ENCODE measurements at regions of chr22 and their contacts with region 1.

Region 1: DNA sequence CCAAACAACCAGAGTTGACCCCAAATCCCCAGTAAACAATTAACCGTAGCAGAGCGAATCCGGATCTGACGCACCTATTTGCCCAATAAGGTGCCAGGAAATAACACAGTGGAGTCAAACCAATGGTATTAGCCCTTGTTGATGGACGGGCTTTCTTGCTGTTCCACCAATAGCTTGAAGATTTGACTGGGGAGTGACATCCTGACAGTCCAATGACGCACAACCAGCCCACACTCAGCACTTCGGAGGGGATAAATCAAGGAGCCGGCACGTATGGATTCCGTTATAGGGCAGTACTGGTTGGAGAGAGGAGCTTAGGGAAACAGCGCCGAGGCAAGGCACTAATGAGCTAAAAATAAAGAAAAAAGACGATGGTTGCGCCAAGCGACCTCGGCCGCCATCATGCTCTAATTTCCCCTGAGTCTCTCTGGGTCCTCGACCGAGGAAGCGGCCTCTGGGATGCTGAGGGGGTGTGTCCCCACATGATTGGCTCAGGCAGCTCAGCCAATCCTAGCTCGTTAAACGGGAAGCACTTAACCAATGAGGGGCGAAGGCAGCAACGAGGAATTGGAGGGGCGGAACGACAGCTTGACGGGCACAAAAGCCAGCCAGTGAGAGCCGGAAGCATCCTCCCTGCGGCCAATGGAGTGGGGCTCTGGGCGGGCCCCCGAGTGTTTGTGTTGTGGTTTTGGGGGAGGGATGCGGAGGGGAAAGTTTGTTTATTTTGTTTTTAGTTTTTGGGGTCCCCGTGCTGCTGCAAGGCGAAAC is 49.5 kb downstream of the FAM83F start:
- DNase-seq: peak; percentile 99
- ATAC-seq: peak; percentile 84
- H3K4me3 ChIP-seq: peak overlapping the region; percentile 65 to 98 (median 97)
- H3K4me3 Mint-ChIP-seq: peak overlapping the region; percentile 95
- H3K27ac ChIP-seq: peak overlapping the region; percentile 97 to 100
- H3K27ac Mint-ChIP-seq: peak overlapping the region; percentile 99
- H3K4me1 ChIP-seq: peaks cover 39 to 43% of the 10 kb centered on the region in 2 donors
- H3K4me1 Mint-ChIP-seq: peaks cover 40% of the 10 kb centered on the region
- H3K27me3 ChIP-seq: peaks cover 0 to 14% (median 2%) of the 10 kb centered on the region in 4 experiments
- H3K27me3 Mint-ChIP-seq: peaks cover 7% of the 10 kb centered on the region
- CTCF ChIP-seq: no peak

Region 2: GRCh38 chr22:39152511-39153219 is 891.6 kb before region 1 on chr22 and contains the start of gene CBX7:
- CTCF ChIA-PET with region 1: no interaction called
- POLR2A ChIA-PET with region 1: interaction called, 3 read pairs
- intact Hi-C with region 1: loop called (anchors 1 kb)
- DNase-seq: peak; percentile 96
- ATAC-seq: peak; percentile 88
- H3K4me3 ChIP-seq: peak within 1 kb of the TSS; percentile 53 to 97 (median 87)
- H3K4me3 Mint-ChIP-seq: peak within 1 kb of the TSS; percentile 90
- H3K27ac ChIP-seq: peak within 1 kb of the TSS; percentile 81 to 97
- H3K27ac Mint-ChIP-seq: peak within 1 kb of the TSS; percentile 90
- H3K4me1 ChIP-seq: peaks cover 51 to 53% of the 10 kb centered on the region in 2 donors
- H3K4me1 Mint-ChIP-seq: peaks cover 43% of the 10 kb centered on the region
- H3K27me3 ChIP-seq: peaks cover 0 to 14% (median 8%) of the 10 kb centered on the region in 4 experiments
- H3K27me3 Mint-ChIP-seq: peaks cover 33% of the 10 kb centered on the region
- CTCF ChIP-seq: no peak
- total RNA-seq, gene CBX7: 141 and 147 TPM in 2 replicates

Region 3: GRCh38 chr22:39471381-39472141 is 572.7 kb before region 1 on chr22:
- CTCF ChIA-PET with region 1: no interaction called
- POLR2A ChIA-PET with region 1: interaction called, 12 read pairs
- intact Hi-C with region 1: no loop called
- DNase-seq: peak; percentile 43
- ATAC-seq: peak; percentile 60
- H3K4me3 ChIP-seq: peak overlapping the region in 1 of 5 experiments; percentile 14
- H3K4me3 Mint-ChIP-seq: peak overlapping the region; percentile 85
- H3K27ac ChIP-seq: peak overlapping the region; percentile 40 to 68
- H3K27ac Mint-ChIP-seq: peak overlapping the region; percentile 89
- H3K4me1 ChIP-seq: peaks cover 41 to 69% of the 10 kb centered on the region in 2 donors
- H3K4me1 Mint-ChIP-seq: peaks cover 64% of the 10 kb centered on the region
- H3K27me3 ChIP-seq: no peaks in the 10 kb centered on the region
- H3K27me3 Mint-ChIP-seq: no peaks in the 10 kb centered on the region
- CTCF ChIP-seq: no peak

Region 4: GRCh38 chr22:39496131-39496838 is 548.0 kb before region 1 on chr22:
- CTCF ChIA-PET with region 1: interaction called, 11 read pairs
- POLR2A ChIA-PET with region 1: interaction called, 6 read pairs
- intact Hi-C with region 1: no loop called
- DNase-seq: peak; percentile 62
- ATAC-seq: peak; percentile 75
- H3K4me3 ChIP-seq: no peak overlapping the region
- H3K4me3 Mint-ChIP-seq: no peak overlapping the region
- H3K27ac ChIP-seq: no peak overlapping the region
- H3K27ac Mint-ChIP-seq: peak overlapping the region; percentile 70
- H3K4me1 ChIP-seq: peaks cover 4 to 7% of the 10 kb centered on the region in 2 donors
- H3K4me1 Mint-ChIP-seq: peaks cover 16% of the 10 kb centered on the region
- H3K27me3 ChIP-seq: no peaks in the 10 kb centered on the region
- H3K27me3 Mint-ChIP-seq: no peaks in the 10 kb centered on the region
- CTCF ChIP-seq: peak; percentile 73

Region 5: DNA sequence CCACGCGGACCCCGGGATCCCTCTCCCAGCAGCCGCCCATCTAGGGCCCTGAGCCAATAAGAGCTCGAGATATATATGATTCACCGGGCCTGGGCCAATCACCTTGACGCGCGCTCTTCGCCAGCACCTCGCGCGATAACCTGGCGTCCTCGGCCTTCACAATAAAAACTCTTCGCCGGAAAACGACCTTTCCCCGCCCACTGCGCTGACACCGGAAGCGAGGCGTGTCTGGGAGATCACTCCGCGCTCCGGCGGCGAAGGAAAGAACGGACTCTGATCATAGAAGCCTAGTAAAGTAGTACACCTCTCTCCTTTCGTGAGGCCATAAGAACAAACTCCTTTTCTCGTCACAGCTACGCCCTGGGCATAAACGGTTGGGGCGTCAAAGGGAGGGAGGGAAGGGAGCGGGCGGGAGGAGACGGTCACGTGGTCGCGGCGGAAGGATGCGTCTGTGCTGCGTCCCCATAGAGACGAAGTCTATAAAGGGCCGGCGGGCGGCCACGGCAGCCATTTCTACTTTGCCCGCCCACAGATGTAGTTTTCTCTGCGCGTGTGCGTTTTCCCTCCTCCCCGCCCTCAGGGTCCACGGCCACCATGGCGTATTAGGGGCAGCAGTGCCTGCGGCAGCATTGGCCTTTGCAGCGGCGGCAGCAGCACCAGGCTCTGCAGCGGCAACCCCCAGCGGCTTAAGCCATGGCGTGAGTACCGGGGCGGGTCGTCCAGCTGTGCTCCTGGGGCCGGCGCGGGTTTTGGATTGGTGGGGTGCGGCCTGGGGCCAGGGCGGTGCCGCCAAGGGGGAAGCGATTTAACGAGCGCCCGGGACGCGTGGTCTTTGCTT is 524.0 kb before region 1 on chr22 and contains the start of gene ATF4:
- CTCF ChIA-PET with region 1: interaction called, 3 read pairs
- POLR2A ChIA-PET with region 1: interaction called, 21 read pairs
- intact Hi-C with region 1: loop called (anchors 1 kb)
- DNase-seq: peak; percentile 100
- ATAC-seq: peak; percentile 89
- H3K4me3 ChIP-seq: peak within 1 kb of the TSS; percentile 82 to 100 (median 99)
- H3K4me3 Mint-ChIP-seq: peak within 1 kb of the TSS; percentile 94
- H3K27ac ChIP-seq: peak within 1 kb of the TSS; percentile 91 to 95
- H3K27ac Mint-ChIP-seq: peak within 1 kb of the TSS; percentile 98
- H3K4me1 ChIP-seq: peaks cover 31 to 49% of the 10 kb centered on the region in 2 donors
- H3K4me1 Mint-ChIP-seq: peaks cover 59% of the 10 kb centered on the region
- H3K27me3 ChIP-seq: no peaks in the 10 kb centered on the region
- H3K27me3 Mint-ChIP-seq: no peaks in the 10 kb centered on the region
- CTCF ChIP-seq: no peak
- total RNA-seq, gene ATF4: 236 and 244 TPM in 2 replicates

Region 6: GRCh38 chr22:40033586-40034380 is 10.5 kb before region 1 on chr22:
- CTCF ChIA-PET with region 1: no interaction called
- POLR2A ChIA-PET with region 1: no interaction called
- intact Hi-C with region 1: no loop called
- DNase-seq: no peak
- ATAC-seq: no peak
- H3K4me3 ChIP-seq: no peak overlapping the region
- H3K4me3 Mint-ChIP-seq: no peak overlapping the region
- H3K27ac ChIP-seq: no peak overlapping the region
- H3K27ac Mint-ChIP-seq: no peak overlapping the region
- H3K4me1 ChIP-seq: peaks cover 0 to 5% of the 10 kb centered on the region in 2 donors
- H3K4me1 Mint-ChIP-seq: peaks cover 2% of the 10 kb centered on the region
- H3K27me3 ChIP-seq: peaks cover 0 to 25% (median 8%) of the 10 kb centered on the region in 4 experiments
- H3K27me3 Mint-ChIP-seq: peaks cover 17% of the 10 kb centered on the region
- CTCF ChIP-seq: no peak

Region 7: GRCh38 chr22:40177738-40178416 is 133.6 kb after region 1 on chr22 and contains the start of gene TNRC6B:
- CTCF ChIA-PET with region 1: interaction called, 5 read pairs
- POLR2A ChIA-PET with region 1: interaction called, 8 read pairs
- intact Hi-C with region 1: loop called (anchors 1 kb)
- DNase-seq: peak; percentile 93
- ATAC-seq: peak; percentile 90
- H3K4me3 ChIP-seq: peak within 1 kb of the TSS; percentile 56 to 100 (median 72)
- H3K4me3 Mint-ChIP-seq: peak within 1 kb of the TSS; percentile 84
- H3K27ac ChIP-seq: peak within 1 kb of the TSS; percentile 65 to 79
- H3K27ac Mint-ChIP-seq: peak within 1 kb of the TSS; percentile 84
- H3K4me1 ChIP-seq: peaks cover 41 to 42% of the 10 kb centered on the region in 2 donors
- H3K4me1 Mint-ChIP-seq: peaks cover 61% of the 10 kb centered on the region
- H3K27me3 ChIP-seq: no peaks in the 10 kb centered on the region
- H3K27me3 Mint-ChIP-seq: no peaks in the 10 kb centered on the region
- CTCF ChIP-seq: no peak
- total RNA-seq, gene TNRC6B: 210 and 248 TPM in 2 replicates

Region 8: GRCh38 chr22:41621099-41621910 is 1577.0 kb after region 1 on chr22 and contains the start of gene XRCC6:
- CTCF ChIA-PET with region 1: no interaction called
- POLR2A ChIA-PET with region 1: no interaction called
- intact Hi-C with region 1: loop called (anchors 5 kb)
- DNase-seq: peak; percentile 100
- ATAC-seq: peak; percentile 96
- H3K4me3 ChIP-seq: peak within 1 kb of the TSS; percentile 68 to 97 (median 89)
- H3K4me3 Mint-ChIP-seq: peak within 1 kb of the TSS; percentile 96
- H3K27ac ChIP-seq: peak within 1 kb of the TSS; percentile 95 to 96
- H3K27ac Mint-ChIP-seq: peak within 1 kb of the TSS; percentile 94
- H3K4me1 ChIP-seq: peaks cover 19 to 27% of the 10 kb centered on the region in 2 donors
- H3K4me1 Mint-ChIP-seq: peaks cover 39% of the 10 kb centered on the region
- H3K27me3 ChIP-seq: no peaks in the 10 kb centered on the region
- H3K27me3 Mint-ChIP-seq: no peaks in the 10 kb centered on the region
- CTCF ChIP-seq: no peak
- total RNA-seq, gene XRCC6: 176 and 180 TPM in 2 replicates